PC-3 (cell line): ENCODE measurements at regions of chr1 and their contacts with region 1.

Region 1: DNA sequence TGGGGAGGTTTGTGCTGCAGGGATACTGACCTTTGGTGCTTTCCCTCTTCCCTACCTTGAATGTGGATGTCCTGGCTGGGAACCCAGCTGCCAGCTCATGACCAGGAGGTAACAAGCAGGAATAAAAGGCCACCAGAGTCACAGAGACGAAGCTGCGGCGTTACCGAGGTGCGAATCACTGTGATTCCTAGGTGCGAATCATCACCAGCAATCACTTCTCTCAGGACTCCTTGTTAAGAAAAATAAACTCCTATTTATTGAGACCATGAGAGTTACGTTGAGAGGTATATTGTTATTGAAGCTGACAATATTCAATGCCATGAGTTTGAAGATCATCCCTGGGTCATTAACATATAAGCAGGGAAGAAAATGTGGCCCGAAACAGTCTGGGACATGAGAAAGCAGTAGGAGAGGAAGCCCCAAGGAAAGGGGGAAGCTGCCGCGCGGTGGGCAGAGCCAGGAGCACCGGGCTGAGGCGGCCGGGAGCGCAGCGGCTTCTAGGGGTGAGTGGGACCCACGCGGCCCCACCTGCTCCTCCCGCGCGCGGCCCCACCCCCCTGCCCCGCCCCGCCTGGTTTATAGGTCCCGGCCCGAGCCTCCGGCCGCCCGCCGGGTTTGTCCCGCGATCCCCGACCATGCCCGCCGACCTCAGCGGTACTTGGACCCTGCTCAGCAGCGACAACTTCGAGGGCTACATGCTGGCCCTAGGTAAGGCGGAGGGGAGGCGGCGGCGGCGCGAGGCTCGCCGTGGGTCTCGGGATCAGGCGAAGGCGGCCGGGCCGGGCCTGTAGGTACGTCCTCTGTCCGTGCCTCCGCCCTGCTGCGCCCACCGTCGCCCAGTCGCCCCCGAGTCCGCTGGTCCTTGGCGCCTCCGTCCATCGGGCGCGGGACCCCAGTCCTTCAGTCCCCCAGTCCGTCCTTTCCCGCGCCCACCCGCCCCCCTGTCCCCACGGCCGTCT is at the start of gene RBP7:
- DNase-seq: peak; percentile 23
- ATAC-seq: peak; percentile 75
- H3K4me3 ChIP-seq: peak within 1 kb of the TSS; percentile 60
- H3K27ac ChIP-seq: no peak within 1 kb of the TSS
- H3K4me1 ChIP-seq: peaks cover 6% of the 10 kb centered on the region; the same call in 1 of the 2 replicates
- H3K27me3 ChIP-seq: no peaks in the 10 kb centered on the region
- CTCF ChIP-seq: no peak
- total RNA-seq, gene RBP7: 6.0 and 7.5 TPM in 2 replicates

Region 2: DNA sequence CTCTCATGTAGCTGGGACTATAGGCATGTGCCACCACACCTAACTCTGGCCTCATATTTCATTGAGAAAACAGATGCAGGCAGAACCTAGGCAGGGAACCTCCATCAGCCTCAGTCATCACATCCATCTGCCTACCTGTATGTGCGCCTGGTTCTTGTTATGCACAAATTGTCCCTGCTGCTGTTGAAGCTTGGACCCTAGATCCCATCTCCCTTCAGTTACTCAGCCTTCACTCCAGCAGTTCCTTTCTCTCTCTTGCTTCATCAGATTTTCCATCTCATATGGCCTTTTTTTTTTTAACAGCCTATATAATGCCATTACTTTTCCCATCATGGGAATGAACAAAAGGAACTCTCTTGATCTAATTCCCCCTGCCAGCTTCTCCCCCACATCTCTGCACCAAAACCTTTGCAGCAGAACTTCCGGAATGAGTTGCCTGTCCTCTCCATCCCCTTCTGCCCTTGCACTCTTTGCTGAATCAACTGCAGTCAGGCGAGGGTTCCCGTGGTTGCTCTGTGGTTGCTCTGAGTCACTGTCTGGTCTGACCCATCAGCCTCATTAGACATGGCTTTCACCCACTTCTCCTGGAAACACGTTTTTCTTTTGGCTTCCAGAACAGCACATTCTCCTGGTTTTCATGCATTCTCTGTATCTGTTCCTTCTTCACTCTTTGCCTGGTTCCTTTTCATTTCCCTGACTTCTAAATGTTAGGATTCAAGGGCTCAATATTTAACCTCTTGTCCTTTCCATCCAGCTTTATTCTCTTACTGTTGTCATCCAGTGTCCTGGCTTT is 77.4 kb after region 1 on chr1:
- CTCF ChIA-PET with region 1: no interaction called
- POLR2A ChIA-PET with region 1: no interaction called
- intact Hi-C with region 1: no loop called
- DNase-seq: peak; percentile 87
- ATAC-seq: peak; percentile 100
- H3K4me3 ChIP-seq: no peak overlapping the region
- H3K27ac ChIP-seq: peak overlapping the region; percentile 78
- H3K4me1 ChIP-seq: peaks cover 19% of the 10 kb centered on the region
- H3K27me3 ChIP-seq: no peaks in the 10 kb centered on the region
- CTCF ChIP-seq: no peak

Region 3: DNA sequence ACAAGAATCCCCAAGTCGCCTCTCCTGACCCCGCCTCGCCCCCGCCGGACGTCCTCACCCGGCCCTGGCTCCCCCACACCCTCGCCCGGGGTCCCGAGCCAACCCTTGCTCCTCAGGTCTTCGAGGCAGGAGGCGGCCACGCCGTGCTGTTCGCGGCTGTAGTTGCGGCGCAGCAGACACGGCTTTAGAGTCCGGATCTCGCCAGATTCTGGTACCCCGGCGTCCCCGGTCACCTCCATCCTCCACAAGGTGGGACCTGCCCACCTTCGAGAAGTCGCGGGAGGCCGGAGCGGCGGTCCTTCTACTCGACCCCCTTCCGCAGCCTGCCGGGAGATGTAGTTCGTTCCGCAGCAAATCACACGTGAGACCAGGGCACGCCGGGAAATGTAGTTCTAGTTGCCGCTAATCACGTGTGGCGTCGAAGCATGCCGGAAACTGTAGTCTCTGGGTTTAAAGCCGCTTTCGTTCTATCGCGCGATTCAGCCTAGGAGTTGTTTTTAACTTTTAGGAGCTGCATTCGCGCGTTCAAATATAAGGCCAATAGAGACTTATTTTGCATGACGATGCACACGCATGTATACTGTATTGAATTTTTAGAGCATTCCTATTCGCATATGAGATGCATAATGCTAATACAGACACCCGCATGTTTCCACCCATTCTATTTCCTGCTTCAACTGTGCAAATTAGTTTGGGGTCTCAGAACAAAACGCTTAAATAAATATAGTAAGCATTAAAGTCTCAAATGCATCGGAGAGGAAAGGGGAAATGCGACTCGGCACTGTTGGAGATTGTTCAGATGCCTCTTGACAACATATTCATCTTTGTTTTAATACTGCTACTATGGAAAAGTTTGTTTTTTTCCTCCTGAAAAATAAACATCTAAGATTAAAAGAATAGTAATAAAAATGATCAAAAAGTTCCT is 475.6 kb after region 1 on chr1 and contains the start of gene DFFA:
- CTCF ChIA-PET with region 1: no interaction called
- POLR2A ChIA-PET with region 1: interaction called, 18 read pairs
- intact Hi-C with region 1: no loop called
- DNase-seq: peak; percentile 95
- ATAC-seq: peak; percentile 71
- H3K4me3 ChIP-seq: peak within 1 kb of the TSS; percentile 92
- H3K27ac ChIP-seq: peak within 1 kb of the TSS; percentile 7; the same call in 1 of the 2 replicates
- H3K4me1 ChIP-seq: peaks cover 24% of the 10 kb centered on the region
- H3K27me3 ChIP-seq: no peaks in the 10 kb centered on the region
- CTCF ChIP-seq: no peak
- total RNA-seq, gene DFFA: 46.7 and 52.0 TPM in 2 replicates